Sigmoid colon (tissue), 7 donors: ENCODE measurements at regions of chr9 and their contacts with region 1.

Region 1: GRCh38 chr9:14314929-14315645 is 1.1 kb upstream of the NFIB start:
- DNase-seq: peak; percentile 98
- H3K4me3 ChIP-seq: peak overlapping the region; percentile 62 to 87 (median 76)
- H3K27ac ChIP-seq: peak overlapping the region; percentile 98 to 99 (median 98)
- H3K4me1 ChIP-seq: peaks cover 0 to 54% (median 46%) of the 10 kb centered on the region in 4 donors
- H3K27me3 ChIP-seq: no peaks in the 10 kb centered on the region
- CTCF ChIP-seq: peak in 1 of 4 experiments; percentile 16
- EP300 ChIP-seq: no peak
- POLR2A ChIP-seq: no peak

Region 2: GRCh38 chr9:14096258-14096922 is 218.7 kb before region 1 on chr9:
- intact Hi-C with region 1: loop called (anchors 5 kb)
- DNase-seq: no peak
- H3K4me3 ChIP-seq: peak overlapping the region in 3 of 4 donors; percentile 13 to 34 (median 25)
- H3K27ac ChIP-seq: peak overlapping the region; percentile 46 to 74 (median 64)
- H3K4me1 ChIP-seq: peaks cover 0 to 46% (median 30%) of the 10 kb centered on the region in 4 donors
- H3K27me3 ChIP-seq: no peaks in the 10 kb centered on the region
- CTCF ChIP-seq: no peak
- EP300 ChIP-seq: no peak
- POLR2A ChIP-seq: no peak

Region 3: DNA sequence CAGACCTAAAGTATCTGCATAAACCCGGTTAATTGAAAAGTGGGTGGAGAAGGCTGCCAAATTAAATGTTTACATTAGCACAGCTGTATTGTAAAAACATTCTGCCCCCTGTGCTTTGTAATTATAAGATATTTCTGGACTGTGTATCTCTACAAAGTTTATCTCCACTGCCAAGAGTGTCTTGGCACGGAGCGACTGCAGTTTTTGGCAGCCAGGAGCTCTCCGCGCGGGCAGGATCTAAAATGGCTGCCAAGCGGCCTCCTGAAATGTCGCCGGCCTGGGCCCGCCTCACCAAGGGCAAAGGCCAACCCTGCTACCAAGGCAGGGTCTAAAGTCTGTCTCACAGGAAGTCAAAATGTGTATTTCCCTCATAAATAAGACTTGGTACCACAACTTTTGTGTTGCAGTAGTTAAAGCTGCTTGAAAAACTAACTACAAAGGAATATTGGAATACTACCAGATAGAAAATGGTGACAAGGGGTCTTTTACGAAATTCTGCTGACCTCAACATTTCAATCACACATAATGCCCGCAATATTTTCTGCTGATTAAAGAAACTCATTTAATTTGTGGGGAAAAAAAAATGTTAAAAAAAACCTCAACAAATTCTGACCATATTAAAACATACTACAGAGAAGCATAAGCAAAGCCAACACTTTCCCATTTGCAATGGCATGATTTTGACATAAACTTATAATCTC is 111.6 kb before region 1 on chr9:
- intact Hi-C with region 1: loop called (anchors 5 kb)
- DNase-seq: peak; percentile 88
- H3K4me3 ChIP-seq: peak overlapping the region in 2 of 4 donors; percentile 1 to 7
- H3K27ac ChIP-seq: peak overlapping the region; percentile 64 to 83 (median 76)
- H3K4me1 ChIP-seq: peaks cover 0 to 85% (median 56%) of the 10 kb centered on the region in 4 donors
- H3K27me3 ChIP-seq: no peaks in the 10 kb centered on the region
- CTCF ChIP-seq: no peak
- EP300 ChIP-seq: no peak
- POLR2A ChIP-seq: no peak

Region 4: DNA sequence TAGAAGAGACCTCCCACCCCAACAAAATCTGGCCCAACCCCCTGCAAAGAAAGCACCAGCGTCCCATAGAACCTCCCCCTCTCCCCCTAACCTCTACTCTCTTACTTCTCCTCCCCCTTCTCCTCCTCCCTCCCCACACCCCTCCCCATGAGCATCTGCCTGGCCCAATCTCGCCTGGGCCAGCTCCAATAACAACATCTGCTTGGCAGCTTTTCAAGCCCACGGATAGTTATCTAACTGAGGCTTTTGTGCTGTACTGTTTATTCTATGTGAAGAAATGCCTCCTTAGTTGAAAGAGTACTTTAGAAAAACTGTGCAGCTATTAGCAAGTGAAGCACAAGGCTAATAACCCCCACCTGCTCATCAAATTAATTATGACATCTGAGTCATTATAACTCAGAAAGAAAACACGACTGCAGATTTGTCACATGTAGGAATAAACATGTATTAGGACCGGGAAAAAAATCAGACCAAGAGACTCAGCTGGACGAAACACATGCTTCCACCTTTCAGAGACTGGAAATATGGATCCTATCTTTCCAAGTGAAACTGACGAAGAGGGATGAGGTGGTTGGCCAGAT is 43.9 kb before region 1 on chr9:
- intact Hi-C with region 1: loop called (anchors 5 kb)
- DNase-seq: peak; percentile 85
- H3K4me3 ChIP-seq: peak overlapping the region in 2 of 4 donors; percentile 1 to 14
- H3K27ac ChIP-seq: peak overlapping the region; percentile 20 to 81 (median 67)
- H3K4me1 ChIP-seq: peaks cover 0 to 70% (median 60%) of the 10 kb centered on the region in 4 donors
- H3K27me3 ChIP-seq: no peaks in the 10 kb centered on the region
- CTCF ChIP-seq: no peak
- EP300 ChIP-seq: no peak
- POLR2A ChIP-seq: no peak